ENCODE measurements at regions of chr14 and their contacts with region 1.

Region 1: GRCh38 chr14:105180592-105181548 is at the start of gene NUDT14:
- DNase-seq: peak; percentile 44 to 59 (median 48)
- H3K4me3 ChIP-seq: peak within 1 kb of the TSS; percentile 6 to 72 (median 60)
- H3K27ac ChIP-seq: no peak within 1 kb of the TSS
- H3K4me1 ChIP-seq: peaks cover 0 to 31% (median 26%) of the 10 kb centered on the region in 4 experiments
- H3K27me3 ChIP-seq: peaks cover 0 to 15% (median 0%) of the 10 kb centered on the region in 5 experiments

Region 2: DNA sequence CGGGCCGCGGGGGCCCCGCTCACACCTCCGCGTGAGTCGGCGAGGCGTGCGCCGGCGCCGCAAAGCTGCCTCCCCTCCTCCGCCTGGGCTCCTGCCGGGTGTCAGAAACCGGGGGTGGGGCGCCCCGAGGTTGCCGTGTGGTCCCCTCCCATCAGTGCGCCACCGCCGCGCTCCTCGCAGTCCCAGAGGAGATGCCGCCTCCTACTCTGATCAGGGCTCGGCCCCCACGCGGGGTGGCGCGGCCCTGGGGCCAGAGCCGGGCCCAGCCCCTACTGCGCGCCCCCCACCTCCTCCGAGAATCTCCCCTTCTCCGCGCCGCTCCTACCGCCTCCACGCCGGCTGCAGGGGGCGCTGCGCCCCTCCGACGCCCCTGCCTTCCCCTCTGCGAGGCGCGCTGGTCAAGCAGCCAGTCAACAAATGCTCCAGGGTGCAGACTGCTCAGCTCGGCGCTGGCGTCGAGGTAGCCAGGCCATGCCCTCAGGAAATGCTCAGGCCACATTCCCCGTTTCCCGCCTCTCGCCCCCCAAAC is 11.8 kb before region 1 on chr14:
- CTCF ChIA-PET with region 1: interaction called, 15 read pairs
- POLR2A ChIA-PET with region 1: interaction called, 3 read pairs
- DNase-seq: peak; percentile 27 to 46 (median 36)
- H3K4me3 ChIP-seq: peak overlapping the region in 3 of 7 experiments; percentile 15 to 52 (median 50)
- H3K27ac ChIP-seq: no peak overlapping the region
- H3K4me1 ChIP-seq: peaks cover 0 to 44% (median 36%) of the 10 kb centered on the region in 4 experiments
- H3K27me3 ChIP-seq: peaks cover 0 to 56% (median 31%) of the 10 kb centered on the region in 5 experiments

Region 3: DNA sequence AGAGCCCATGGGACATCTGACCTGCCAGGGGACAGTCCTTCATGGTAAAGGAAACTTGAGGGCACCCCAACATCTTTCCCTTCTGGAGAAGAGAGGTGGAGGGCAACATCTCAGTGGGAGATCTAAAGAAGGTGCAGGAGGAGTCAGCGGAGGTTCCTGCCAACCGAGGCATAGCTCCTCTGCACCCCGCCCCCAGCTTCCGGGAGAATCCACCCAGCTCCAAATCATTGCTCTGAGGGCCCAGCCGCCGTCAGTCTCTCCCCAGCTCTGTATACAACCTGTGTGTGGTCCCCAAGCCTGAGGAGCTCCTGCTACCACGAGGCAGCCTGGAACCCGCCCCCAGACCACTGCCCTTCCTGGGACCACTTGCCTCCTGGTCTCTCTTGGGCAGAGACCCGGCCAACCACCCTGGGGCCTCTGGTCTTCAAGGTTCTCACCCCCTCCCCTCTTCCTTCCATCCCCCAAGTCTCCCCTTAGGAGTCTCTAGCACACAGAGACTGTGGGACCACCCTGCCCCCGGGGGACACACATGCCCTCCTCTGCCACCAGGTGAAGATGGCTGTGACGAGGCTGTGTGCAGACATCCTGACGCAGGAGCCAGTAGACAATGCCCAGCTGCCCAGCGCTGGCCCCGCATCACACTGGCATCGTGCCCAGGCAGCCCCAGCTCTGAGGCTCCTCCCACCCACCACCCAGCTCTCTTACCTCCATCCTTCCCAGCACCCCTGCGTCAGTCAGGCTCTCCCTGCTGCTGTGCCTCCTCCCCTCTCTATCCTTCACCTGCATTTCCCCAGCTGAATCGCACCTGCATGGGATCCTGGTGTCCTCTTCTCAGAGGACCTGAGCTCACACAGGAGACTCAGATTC is 13.3 kb after region 1 on chr14:
- CTCF ChIA-PET with region 1: interaction called, 248 read pairs
- POLR2A ChIA-PET with region 1: interaction called, 7 read pairs
- DNase-seq: no peak
- H3K4me3 ChIP-seq: no peak overlapping the region
- H3K27ac ChIP-seq: no peak overlapping the region
- H3K4me1 ChIP-seq: peaks cover 0 to 50% (median 45%) of the 10 kb centered on the region in 4 experiments
- H3K27me3 ChIP-seq: peaks cover 0 to 59% (median 20%) of the 10 kb centered on the region in 5 experiments

Region 4: DNA sequence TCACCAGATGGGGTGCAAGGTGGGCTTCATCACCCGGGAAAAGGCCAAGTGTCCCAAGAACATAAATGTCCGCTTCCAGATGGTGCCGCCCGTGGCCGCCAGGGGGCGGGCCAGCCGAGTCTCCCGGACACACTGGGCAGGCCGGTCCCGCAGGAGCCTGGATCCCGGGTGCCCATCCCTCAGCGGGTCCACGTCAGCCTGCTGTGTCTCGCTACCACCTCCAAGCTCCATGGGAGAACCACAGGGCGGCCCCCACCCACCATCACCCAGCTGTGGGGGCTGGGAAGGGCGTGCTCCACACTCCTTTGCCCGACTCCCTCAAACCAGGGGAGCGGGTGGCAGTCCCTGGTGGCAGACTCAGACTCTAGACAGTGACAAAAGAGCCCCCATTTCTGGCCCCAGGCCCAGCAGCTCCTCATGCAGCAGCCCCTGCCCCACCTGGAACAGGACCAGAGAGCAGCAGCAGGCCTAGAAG is 22.2 kb after region 1 on chr14:
- CTCF ChIA-PET with region 1: interaction called, 248 read pairs
- POLR2A ChIA-PET with region 1: no interaction called
- DNase-seq: peak in 2 of 3 donors; percentile 53 to 55
- H3K4me3 ChIP-seq: no peak overlapping the region
- H3K27ac ChIP-seq: no peak overlapping the region
- H3K4me1 ChIP-seq: peaks cover 0 to 54% (median 40%) of the 10 kb centered on the region in 4 experiments
- H3K27me3 ChIP-seq: peaks cover 0 to 28% (median 11%) of the 10 kb centered on the region in 5 experiments